ENCODE measurements at regions of chr7 and their contacts with region 1.

Region 1: DNA sequence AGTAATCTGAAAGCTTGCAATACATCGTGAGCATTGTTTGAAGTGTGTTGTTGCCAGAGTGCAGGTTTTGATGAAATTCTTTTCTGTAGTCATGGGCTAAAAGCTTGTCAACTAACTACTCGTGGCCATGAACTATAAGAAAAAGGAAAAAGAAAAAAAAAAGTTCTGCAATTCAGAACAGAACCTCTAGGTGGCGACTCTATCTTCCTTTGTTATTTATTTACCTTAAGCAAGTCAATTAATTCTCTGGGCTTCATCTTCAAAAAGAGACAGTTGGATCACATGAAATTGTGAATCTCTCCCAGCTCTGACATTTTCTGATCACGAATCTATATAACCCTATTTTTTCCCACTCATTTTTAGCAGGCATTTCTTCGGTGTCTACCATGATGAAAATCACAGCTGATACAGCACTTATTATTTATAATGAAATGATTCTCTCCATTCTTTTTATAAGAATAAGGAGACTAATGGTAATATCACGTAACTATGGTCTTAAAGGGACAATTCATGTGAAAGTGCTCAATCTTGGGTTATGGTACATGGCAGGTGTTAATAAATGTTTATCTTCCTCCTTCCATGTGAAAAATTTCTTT is 18.8 kb downstream of the TMEM196 start:
- DNase-seq: no peak
- ATAC-seq: peak; percentile 42
- H3K4me3 Mint-ChIP-seq: no peak overlapping the region
- H3K27ac Mint-ChIP-seq: no peak overlapping the region
- H3K4me1 Mint-ChIP-seq: no peaks in the 10 kb centered on the region
- H3K27me3 Mint-ChIP-seq: no peaks in the 10 kb centered on the region
- CTCF ChIP-seq: no peak

Region 2: GRCh38 chr7:19552576-19552975 is 202.0 kb before region 1 on chr7:
- CTCF ChIA-PET with region 1: no interaction called
- POLR2A ChIA-PET with region 1: no interaction called
- intact Hi-C with region 1: no loop called
- DNase-seq: no peak
- ATAC-seq: no peak
- H3K4me3 Mint-ChIP-seq: no peak overlapping the region
- H3K27ac Mint-ChIP-seq: no peak overlapping the region
- H3K4me1 Mint-ChIP-seq: no peaks in the 10 kb centered on the region
- H3K27me3 Mint-ChIP-seq: no peaks in the 10 kb centered on the region
- CTCF ChIP-seq: no peak

Region 3: GRCh38 chr7:20172736-20173334 is 418.2 kb after region 1 on chr7:
- CTCF ChIA-PET with region 1: interaction called, 12 read pairs
- POLR2A ChIA-PET with region 1: no interaction called
- intact Hi-C with region 1: loop called (anchors 1 kb)
- DNase-seq: peak; percentile 27
- ATAC-seq: peak; percentile 61
- H3K4me3 Mint-ChIP-seq: no peak overlapping the region
- H3K27ac Mint-ChIP-seq: no peak overlapping the region
- H3K4me1 Mint-ChIP-seq: peaks cover 11% of the 10 kb centered on the region
- H3K27me3 Mint-ChIP-seq: no peaks in the 10 kb centered on the region
- CTCF ChIP-seq: no peak

Region 4: DNA sequence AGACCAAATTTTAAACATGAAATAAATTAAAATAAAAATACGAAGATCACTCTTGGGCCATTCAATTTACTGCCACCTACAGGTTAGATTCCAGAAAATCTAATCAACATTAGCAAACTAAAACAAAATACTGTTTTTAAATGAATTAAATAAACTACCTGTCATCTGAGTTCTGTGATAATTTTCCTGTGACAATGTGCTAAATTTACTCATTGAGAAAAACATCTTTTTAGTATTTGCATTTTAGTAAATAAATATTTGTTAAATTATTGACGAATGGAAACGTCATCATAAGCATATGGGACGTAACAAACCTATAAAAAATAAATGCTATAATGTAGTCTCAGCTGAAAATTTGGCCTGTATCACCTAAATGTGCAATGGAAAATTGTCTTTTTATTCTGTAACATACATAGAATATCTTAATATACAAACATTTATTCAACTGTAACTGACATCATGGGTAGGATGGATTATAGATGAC is 648.2 kb after region 1 on chr7:
- CTCF ChIA-PET with region 1: interaction called, 3 read pairs
- POLR2A ChIA-PET with region 1: no interaction called
- intact Hi-C with region 1: loop called (anchors 1 kb)
- DNase-seq: no peak
- ATAC-seq: no peak
- H3K4me3 Mint-ChIP-seq: no peak overlapping the region
- H3K27ac Mint-ChIP-seq: no peak overlapping the region
- H3K4me1 Mint-ChIP-seq: no peaks in the 10 kb centered on the region
- H3K27me3 Mint-ChIP-seq: no peaks in the 10 kb centered on the region
- CTCF ChIP-seq: no peak

Measured in activated B cell treated with CpG ODN at 0.5 μM for 24 hours (primary cell).